Activated B cell treated with CpG ODN at 0.5 μM for 24 hours (primary cell): ENCODE measurements at regions of chr2 and their contacts with region 1.

Region 1: GRCh38 chr2:74958274-74959105 is at the start of gene POLE4:
- DNase-seq: peak; percentile 95
- ATAC-seq: peak; percentile 92
- H3K4me3 Mint-ChIP-seq: peak within 1 kb of the TSS; percentile 88
- H3K27ac Mint-ChIP-seq: peak within 1 kb of the TSS; percentile 94
- H3K4me1 Mint-ChIP-seq: peaks cover 72% of the 10 kb centered on the region
- H3K27me3 Mint-ChIP-seq: no peaks in the 10 kb centered on the region
- CTCF ChIP-seq: no peak
- total RNA-seq, gene POLE4: 61.5 and 73.7 TPM in 2 replicates

Region 2: DNA sequence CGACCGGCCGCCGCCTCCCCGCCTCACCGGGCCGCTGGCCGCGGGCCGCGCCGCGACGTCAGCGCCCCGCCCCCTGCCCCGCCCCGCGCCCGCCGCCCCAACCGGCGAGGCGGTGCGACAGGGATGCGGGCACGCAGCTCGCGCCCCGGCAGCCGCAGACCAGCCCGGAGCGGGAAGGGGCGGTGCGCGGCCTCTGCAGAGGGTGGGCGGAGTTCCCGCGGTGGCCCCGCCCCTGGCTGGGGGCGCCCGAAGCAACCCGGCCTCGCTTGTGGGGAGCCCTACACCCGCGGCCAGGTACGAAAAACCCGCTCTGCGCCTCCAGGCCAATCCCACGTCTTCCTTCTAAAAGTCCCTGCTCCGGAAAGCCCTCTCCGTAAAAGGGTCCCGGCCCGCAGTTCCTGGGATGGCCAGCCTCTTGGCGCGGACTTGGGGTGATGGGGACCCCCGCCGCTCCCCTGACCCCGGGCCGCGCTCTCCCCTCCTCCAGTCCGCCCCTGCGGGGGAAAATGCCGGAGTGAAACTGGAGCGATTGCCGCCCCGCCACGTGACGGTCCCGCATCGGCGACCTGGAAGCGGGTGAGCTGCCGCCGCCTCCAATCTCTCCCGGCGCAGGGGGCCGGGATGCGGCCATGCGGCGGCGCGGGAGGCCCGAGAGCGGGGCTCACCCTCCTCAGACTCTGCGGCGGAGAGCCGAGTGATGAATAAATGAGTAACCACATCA is 1845.4 kb before region 1 on chr2 and contains the start of gene RAB11FIP5:
- CTCF ChIA-PET with region 1: no interaction called
- POLR2A ChIA-PET with region 1: no interaction called
- intact Hi-C with region 1: loop called (anchors 5 kb)
- DNase-seq: peak; percentile 75
- ATAC-seq: peak; percentile 91
- H3K4me3 Mint-ChIP-seq: peak within 1 kb of the TSS; percentile 77
- H3K27ac Mint-ChIP-seq: peak within 1 kb of the TSS; percentile 59
- H3K4me1 Mint-ChIP-seq: peaks cover 11% of the 10 kb centered on the region
- H3K27me3 Mint-ChIP-seq: no peaks in the 10 kb centered on the region
- CTCF ChIP-seq: no peak
- total RNA-seq, gene RAB11FIP5: 3.2 and 3.5 TPM in 2 replicates

Region 3: GRCh38 chr2:73736855-73737779 is 1221.4 kb before region 1 on chr2 and contains the start of gene TPRKB:
- CTCF ChIA-PET with region 1: no interaction called
- POLR2A ChIA-PET with region 1: no interaction called
- intact Hi-C with region 1: loop called (anchors 10 kb)
- DNase-seq: peak; percentile 85
- ATAC-seq: peak; percentile 98
- H3K4me3 Mint-ChIP-seq: peak within 1 kb of the TSS; percentile 94
- H3K27ac Mint-ChIP-seq: peak within 1 kb of the TSS; percentile 90
- H3K4me1 Mint-ChIP-seq: peaks cover 18% of the 10 kb centered on the region
- H3K27me3 Mint-ChIP-seq: no peaks in the 10 kb centered on the region
- CTCF ChIP-seq: no peak
- total RNA-seq, gene TPRKB: 26.9 and 27.1 TPM in 2 replicates

Region 4: DNA sequence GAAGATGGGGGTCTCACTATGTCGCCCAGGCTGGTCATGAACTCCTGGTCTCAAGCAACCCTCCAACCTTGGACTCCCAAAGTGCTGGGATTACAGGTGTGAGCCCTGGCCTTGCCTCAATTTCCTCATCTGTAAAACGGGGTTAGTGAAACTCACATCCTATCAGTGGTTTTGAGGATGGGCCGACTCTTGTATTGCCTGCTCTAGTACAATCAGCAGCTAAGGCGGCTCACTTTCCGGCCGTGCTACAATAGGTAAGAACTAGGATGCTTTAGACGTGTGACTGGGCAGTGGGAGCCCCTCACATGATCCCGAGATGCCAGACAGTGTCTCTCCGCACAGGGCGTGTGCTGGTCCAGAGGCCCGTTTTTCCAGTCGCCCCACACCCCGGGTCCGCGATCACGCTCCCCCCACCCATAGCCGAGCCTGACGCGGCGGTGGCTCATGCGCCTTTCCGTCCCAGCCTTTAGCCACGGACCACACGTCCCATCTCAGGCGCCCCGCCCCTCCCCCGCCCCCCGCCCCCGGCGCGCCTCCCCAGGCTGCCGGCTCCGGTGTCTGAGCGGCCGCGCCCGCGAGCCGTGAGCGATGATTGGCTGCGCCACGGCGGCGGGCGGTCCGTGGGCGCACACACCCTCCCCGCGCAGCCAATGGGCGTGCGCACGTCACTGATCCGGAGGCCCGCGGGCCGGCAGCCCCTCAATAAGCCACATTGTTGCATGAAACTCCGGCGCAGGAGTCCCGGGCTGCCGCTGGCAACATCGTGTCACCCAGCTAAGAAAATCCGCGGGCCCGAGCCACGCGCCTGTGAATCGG is 124.9 kb before region 1 on chr2 and contains the start of gene HK2:
- CTCF ChIA-PET with region 1: no interaction called
- POLR2A ChIA-PET with region 1: no interaction called
- intact Hi-C with region 1: loop called (anchors 1 kb)
- DNase-seq: peak; percentile 80
- ATAC-seq: peak; percentile 82
- H3K4me3 Mint-ChIP-seq: peak within 1 kb of the TSS; percentile 95
- H3K27ac Mint-ChIP-seq: peak within 1 kb of the TSS; percentile 90
- H3K4me1 Mint-ChIP-seq: peaks cover 32% of the 10 kb centered on the region
- H3K27me3 Mint-ChIP-seq: no peaks in the 10 kb centered on the region
- CTCF ChIP-seq: no peak
- total RNA-seq, gene HK2: 14.5 and 15.3 TPM in 2 replicates

Region 5: DNA sequence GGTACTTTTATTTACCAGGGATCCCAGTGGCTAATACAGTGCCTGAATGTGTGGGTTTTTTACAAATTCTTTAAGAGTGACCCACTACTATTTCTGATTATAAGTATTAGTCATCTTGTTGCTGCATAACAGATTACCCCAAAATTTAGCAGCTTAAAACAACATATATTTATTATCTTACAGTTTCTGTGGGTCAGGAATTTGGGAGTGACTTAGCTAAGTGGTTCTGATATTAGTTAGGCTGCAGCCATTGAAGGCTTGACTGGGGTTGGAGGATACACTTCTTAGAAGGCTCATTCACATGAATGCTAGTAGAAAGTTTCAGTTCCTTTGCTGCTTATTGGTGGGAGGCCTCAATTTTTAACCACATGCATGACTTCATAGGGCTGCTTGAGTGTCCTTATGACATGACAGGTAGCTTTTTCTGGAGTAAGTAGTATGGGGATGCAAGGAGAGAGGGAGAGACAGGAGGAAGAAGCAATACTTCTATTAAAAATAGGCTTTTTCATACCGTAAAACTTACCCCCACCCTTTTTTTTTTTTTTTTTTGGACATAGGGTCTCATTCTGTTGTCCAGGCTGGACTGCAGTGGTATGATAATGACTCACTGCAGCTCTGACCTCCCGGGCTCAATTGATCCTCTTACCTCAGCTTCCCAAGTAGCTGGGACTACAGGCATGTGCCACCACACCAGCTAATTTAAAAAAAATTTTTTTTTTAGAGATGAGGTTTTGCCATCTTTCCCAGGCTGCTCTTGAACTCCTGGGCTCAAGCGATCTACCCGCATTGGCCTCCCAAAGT is 13.3 kb before region 1 on chr2:
- CTCF ChIA-PET with region 1: no interaction called
- POLR2A ChIA-PET with region 1: interaction called, 4 read pairs
- intact Hi-C with region 1: loop called (anchors 2 kb)
- DNase-seq: no peak
- ATAC-seq: peak; percentile 99
- H3K4me3 Mint-ChIP-seq: no peak overlapping the region
- H3K27ac Mint-ChIP-seq: no peak overlapping the region
- H3K4me1 Mint-ChIP-seq: peaks cover 40% of the 10 kb centered on the region
- H3K27me3 Mint-ChIP-seq: no peaks in the 10 kb centered on the region
- CTCF ChIP-seq: no peak

Region 6: GRCh38 chr2:75053484-75054112 is 95.1 kb after region 1 on chr2:
- CTCF ChIA-PET with region 1: no interaction called
- POLR2A ChIA-PET with region 1: no interaction called
- intact Hi-C with region 1: no loop called
- DNase-seq: no peak
- ATAC-seq: peak; percentile 62
- H3K4me3 Mint-ChIP-seq: no peak overlapping the region
- H3K27ac Mint-ChIP-seq: no peak overlapping the region
- H3K4me1 Mint-ChIP-seq: no peaks in the 10 kb centered on the region
- H3K27me3 Mint-ChIP-seq: no peaks in the 10 kb centered on the region
- CTCF ChIP-seq: no peak

Region 7: DNA sequence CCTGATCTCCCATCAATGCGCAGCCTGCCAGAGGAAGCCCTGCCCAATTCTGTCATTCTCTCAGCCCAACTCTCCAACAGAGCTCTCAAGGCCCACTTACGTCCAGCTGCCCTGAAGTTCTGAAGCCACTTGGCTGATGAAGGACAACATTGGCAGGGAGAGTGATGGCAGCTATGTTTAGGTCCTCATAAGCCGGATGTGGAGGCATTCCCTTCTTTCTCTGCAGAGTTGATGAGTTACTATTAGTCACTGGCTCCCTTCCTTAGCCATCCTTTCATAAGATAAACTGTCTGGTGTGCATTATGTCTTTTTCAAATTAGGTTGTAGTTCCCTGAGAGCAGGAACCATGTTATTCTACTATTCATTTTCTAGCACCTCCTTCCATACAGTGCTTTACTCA is 263.4 kb after region 1 on chr2:
- CTCF ChIA-PET with region 1: no interaction called
- POLR2A ChIA-PET with region 1: no interaction called
- intact Hi-C with region 1: no loop called
- DNase-seq: no peak
- ATAC-seq: no peak
- H3K4me3 Mint-ChIP-seq: no peak overlapping the region
- H3K27ac Mint-ChIP-seq: no peak overlapping the region
- H3K4me1 Mint-ChIP-seq: no peaks in the 10 kb centered on the region
- H3K27me3 Mint-ChIP-seq: peaks cover 15% of the 10 kb centered on the region
- CTCF ChIP-seq: no peak

Region 8: DNA sequence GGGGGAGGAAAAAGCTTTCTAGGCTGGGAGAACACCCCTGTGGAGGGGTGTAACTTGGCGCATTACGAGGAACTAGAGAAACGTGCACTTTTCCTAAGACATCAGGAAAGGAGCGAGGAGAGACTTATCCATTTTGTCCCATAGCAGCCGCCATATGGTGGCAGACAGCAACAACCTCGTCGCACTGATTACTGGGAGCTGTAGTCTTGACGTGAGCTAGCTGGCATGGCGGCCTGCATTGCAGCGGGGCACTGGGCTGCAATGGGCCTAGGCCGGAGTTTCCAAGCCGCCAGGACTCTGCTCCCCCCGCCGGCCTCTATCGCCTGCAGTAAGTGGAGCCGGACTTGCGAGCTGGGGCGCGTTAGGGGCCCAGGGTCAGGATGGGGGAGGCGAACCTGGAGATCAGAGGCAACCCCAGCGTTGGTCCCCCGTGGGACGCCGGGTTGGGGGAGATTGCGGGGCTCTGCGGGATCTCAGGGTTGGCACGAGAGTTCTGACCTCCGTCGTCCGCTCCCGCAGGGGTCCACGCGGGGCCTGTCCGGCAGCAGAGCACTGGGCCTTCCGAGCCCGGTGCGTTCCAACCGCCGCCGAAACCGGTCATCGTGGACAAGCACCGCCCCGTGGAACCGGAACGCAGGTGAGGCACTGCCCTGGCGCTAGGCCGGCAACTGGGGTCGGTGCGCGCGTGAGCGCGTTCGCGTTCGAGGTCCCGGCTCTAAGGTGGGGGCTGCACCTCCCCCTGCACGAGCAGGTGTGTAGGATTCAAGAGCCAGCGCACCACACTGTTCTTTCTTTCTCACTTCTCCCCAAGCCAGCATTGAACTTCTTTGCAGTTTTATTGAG is 688.3 kb after region 1 on chr2 and contains the start of gene MRPL19:
- CTCF ChIA-PET with region 1: no interaction called
- POLR2A ChIA-PET with region 1: no interaction called
- intact Hi-C with region 1: loop called (anchors 1 kb)
- DNase-seq: peak; percentile 59
- ATAC-seq: peak; percentile 96
- H3K4me3 Mint-ChIP-seq: peak within 1 kb of the TSS; percentile 95
- H3K27ac Mint-ChIP-seq: peak within 1 kb of the TSS; percentile 91
- H3K4me1 Mint-ChIP-seq: peaks cover 23% of the 10 kb centered on the region
- H3K27me3 Mint-ChIP-seq: no peaks in the 10 kb centered on the region
- CTCF ChIP-seq: no peak
- total RNA-seq, gene MRPL19: 39.1 and 39.6 TPM in 2 replicates